Heart left ventricle (tissue), 16 donors: ENCODE measurements at regions of chr13 and their contacts with region 1.

Region 1: DNA sequence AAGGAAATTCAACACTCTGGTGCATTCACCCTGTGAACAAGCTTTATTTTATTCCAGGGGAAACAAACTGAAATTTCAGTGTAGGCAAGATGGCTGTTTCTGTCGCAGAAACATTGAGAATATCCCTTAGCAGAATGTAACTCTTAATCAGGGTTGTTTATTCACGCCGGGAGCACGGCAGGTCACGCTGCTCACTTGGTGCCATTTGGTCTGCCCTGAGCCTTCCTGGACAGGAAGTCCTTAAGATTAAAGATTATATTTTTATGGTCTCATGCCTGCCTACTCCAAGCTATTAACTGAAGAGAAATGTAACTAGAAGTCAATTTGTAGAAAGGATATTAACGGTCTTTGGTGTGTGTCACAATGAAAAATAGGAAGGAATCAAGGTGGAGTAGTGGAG is 185.3 kb upstream of the ARGLU1 start:
- DNase-seq: peak in 2 of 5 donors; percentile 26 to 36
- ATAC-seq: peak in 3 of 4 donors; percentile 61 to 67 (median 65)
- H3K4me3 ChIP-seq: peak overlapping the region in 1 of 12 donors; percentile 5
- H3K27ac ChIP-seq: peak overlapping the region in 9 of 12 donors; percentile 11 to 68 (median 38)
- H3K4me1 ChIP-seq: peaks cover 0 to 39% (median 10%) of the 10 kb centered on the region in 12 donors
- H3K27me3 ChIP-seq: no peaks in the 10 kb centered on the region
- CTCF ChIP-seq: no peak
- POLR2A ChIP-seq: no peak

Region 2: GRCh38 chr13:106701771-106702341 is 51.4 kb before region 1 on chr13:
- intact Hi-C with region 1: loop called in 2 of 10 experiments (anchors 5 kb)
- DNase-seq: peak in 4 of 5 donors; percentile 55 to 65 (median 62)
- ATAC-seq: peak; percentile 74 to 94 (median 83)
- H3K4me3 ChIP-seq: peak overlapping the region in 4 of 12 donors; percentile 5 to 23 (median 15)
- H3K27ac ChIP-seq: peak overlapping the region in 11 of 12 donors; percentile 31 to 83 (median 72)
- H3K4me1 ChIP-seq: peaks cover 0 to 44% (median 6%) of the 10 kb centered on the region in 12 donors
- H3K27me3 ChIP-seq: no peaks in the 10 kb centered on the region
- CTCF ChIP-seq: no peak
- POLR2A ChIP-seq: no peak